ENCODE measurements at regions of chr6 and their contacts with region 1.

Region 1: DNA sequence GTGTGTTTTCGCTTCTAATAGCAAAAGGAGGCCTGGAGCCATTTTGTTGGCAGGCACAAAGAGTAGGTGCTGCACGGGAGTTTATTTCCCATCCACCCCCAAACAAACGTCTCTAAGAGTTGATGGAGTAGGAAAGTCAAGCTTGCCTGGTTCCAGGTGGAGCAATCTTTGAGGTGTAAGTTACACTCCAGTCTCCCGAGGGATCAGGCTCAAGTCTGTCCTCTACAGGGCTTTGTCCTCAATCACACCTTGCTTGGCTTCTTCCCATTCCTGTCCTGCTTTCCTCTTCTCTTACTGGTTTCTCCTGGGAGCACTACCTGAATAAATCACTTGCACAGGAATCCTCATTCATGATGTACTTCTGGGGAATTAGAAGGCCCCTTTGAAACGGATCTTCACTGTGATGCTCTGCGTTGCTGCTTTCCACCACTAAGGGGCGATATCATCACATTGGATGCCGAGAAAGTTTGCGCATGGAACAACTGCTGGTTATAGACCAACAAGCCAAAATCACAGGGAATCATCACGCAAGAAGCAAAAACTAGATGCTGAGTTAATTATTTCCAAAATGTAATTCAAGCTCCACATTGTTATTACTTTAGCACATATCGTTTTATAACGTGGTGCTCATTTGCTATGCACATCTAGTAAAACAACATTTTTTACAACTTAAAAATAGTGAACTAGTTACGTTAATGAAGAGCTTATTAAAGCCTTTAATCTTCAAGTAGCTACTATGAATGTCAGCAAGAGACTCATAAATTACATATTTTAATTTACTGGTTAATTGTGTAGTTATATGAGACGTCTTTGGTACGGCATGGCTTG is 156.8 kb downstream of the DNAH8 start:
- DNase-seq: peak; percentile 55 to 73 (median 61)
- ATAC-seq: peak; percentile 45
- H3K4me3 ChIP-seq: no peak overlapping the region
- H3K27ac ChIP-seq: no peak overlapping the region
- H3K4me1 ChIP-seq: no peaks in the 10 kb centered on the region
- H3K27me3 ChIP-seq: peaks cover 0 to 4% of the 10 kb centered on the region in 2 donors
- CTCF ChIP-seq: peak; percentile 76 to 92 (median 90)
- POLR2A ChIP-seq: no peak

Region 2: DNA sequence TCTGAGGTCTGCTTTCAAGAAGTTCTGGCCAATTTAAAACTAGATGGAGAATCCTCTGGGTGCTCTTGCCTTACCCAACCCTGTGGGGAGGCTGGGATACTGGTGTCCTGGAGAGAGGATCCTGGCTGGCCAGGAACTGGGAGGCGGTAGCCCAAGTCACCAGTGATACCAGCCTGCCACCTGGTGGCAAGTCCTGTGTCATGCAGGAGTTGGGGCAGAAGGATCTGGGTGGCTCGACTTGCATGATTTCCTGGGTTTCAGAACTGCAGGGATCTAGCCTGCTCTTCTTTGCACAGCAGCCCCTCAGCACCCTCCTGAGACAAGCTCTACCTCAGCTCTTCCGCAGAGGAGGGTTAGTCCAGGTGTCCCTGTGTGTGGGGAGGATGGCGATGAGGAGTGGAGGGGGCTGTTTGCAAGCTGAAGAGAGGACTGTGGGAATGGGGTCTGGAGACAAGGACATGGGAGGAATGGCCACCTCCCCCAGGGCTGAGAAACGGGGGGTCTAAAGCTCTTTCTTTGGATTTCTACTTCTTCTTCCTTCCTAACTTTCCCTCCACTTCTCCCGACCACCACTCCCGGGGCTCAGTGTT is 438.1 kb after region 1 on chr6:
- intact Hi-C with region 1: loop called (anchors 10 kb)
- DNase-seq: peak; percentile 79 to 85 (median 82)
- ATAC-seq: peak; percentile 82
- H3K4me3 ChIP-seq: no peak overlapping the region
- H3K27ac ChIP-seq: no peak overlapping the region
- H3K4me1 ChIP-seq: peaks cover 18% of the 10 kb centered on the region
- H3K27me3 ChIP-seq: peaks cover 0 to 4% of the 10 kb centered on the region in 2 donors
- CTCF ChIP-seq: peak; percentile 85 to 94 (median 93)
- POLR2A ChIP-seq: no peak

Measured in body of pancreas (tissue), 4 donors.